CD8-positive, alpha-beta T cell (primary cell): ENCODE measurements at regions of chr1 and their contacts with region 1.

Region 1: DNA sequence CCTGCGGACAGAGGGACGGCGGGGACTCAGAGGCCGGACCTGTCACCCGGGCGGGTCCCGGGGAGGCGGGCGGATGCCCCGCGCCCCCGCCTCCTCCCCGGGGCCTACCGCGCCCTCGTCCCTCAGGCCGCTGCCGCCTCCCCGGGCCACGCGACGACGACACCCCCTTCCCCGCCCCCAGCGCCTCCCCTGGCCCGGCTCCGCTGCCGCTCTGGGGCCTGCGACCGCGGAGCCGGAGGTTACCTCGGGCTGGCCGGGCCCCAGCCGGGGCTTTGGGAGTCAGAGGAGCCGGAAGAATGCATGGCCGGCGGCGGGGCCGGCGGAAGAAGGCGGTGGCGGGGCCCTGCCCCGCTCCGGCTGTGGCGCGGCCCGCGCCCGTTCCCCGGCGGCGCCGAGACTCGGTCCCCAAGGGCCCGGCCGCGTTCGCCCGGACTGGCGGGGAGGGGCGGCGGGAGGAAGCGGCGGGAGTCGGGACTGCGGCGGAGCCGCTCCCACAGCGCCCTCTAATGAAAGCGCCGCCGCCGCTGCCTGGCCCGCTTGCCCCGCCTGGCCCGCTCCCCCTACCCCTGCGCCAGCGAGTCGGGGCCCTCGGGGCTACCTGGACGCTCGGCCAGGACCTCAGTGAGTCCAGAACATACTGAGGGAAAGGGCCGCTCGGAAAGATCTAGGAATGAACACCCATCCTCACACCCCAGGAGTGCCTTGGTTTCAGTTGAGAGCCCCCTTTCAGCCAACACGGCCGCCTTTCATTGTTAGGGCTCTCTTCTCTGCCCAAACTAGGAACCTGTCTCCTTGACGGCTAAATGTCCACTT is at the start of gene LPGAT1:
- DNase-seq: peak; percentile 37 to 84 (median 71)
- ATAC-seq: peak; percentile 79
- H3K4me3 ChIP-seq: peak within 1 kb of the TSS; percentile 69 to 75
- H3K4me3 Mint-ChIP-seq: peak within 1 kb of the TSS; percentile 90
- H3K27ac ChIP-seq: peak within 1 kb of the TSS; percentile 50 to 78
- H3K27ac Mint-ChIP-seq: peak within 1 kb of the TSS; percentile 92
- H3K4me1 ChIP-seq: peaks cover 44% of the 10 kb centered on the region
- H3K4me1 Mint-ChIP-seq: peaks cover 64% of the 10 kb centered on the region
- H3K27me3 ChIP-seq: no peaks in the 10 kb centered on the region
- H3K27me3 Mint-ChIP-seq: no peaks in the 10 kb centered on the region
- CTCF ChIP-seq: peak; percentile 51
- total RNA-seq, gene LPGAT1: 17.9 to 19.1 TPM

Region 2: GRCh38 chr1:211739671-211740411 is 90.7 kb before region 1 on chr1:
- CTCF ChIA-PET with region 1: no interaction called
- POLR2A ChIA-PET with region 1: no interaction called
- intact Hi-C with region 1: loop called in 1 of 2 experiments (anchors 5 kb)
- DNase-seq: peak in 3 of 9 experiments; percentile 31 to 66 (median 49)
- ATAC-seq: peak; percentile 67
- H3K4me3 ChIP-seq: peak overlapping the region in 1 of 2 experiments; percentile 10
- H3K4me3 Mint-ChIP-seq: peak overlapping the region; percentile 74
- H3K27ac ChIP-seq: peak overlapping the region in 1 of 2 experiments; percentile 68
- H3K27ac Mint-ChIP-seq: peak overlapping the region; percentile 90
- H3K4me1 ChIP-seq: peaks cover 35% of the 10 kb centered on the region
- H3K4me1 Mint-ChIP-seq: peaks cover 39% of the 10 kb centered on the region
- H3K27me3 ChIP-seq: no peaks in the 10 kb centered on the region
- H3K27me3 Mint-ChIP-seq: no peaks in the 10 kb centered on the region
- CTCF ChIP-seq: no peak

Region 3: DNA sequence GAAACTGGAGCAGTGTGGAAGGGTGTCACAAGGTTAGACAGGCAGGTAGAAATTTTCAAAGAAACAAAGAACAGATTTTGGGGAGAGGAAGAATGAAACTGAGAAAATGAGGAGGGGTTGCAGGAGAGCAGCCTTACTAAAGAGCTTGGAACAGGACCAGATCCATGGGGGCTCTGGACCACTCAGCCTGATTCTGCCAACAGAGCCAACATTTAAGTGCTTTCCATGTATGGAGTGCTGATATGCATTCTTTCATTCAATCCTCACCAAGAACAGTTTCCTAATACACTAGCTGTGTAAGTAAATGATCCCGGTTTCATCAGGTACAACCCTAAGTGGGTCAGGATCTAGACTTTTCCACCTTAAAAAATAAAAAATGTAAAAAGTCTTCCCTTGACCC is 16.2 kb before region 1 on chr1:
- CTCF ChIA-PET with region 1: no interaction called
- POLR2A ChIA-PET with region 1: no interaction called
- intact Hi-C with region 1: no loop called
- DNase-seq: no peak
- ATAC-seq: no peak
- H3K4me3 ChIP-seq: no peak overlapping the region
- H3K4me3 Mint-ChIP-seq: no peak overlapping the region
- H3K27ac ChIP-seq: no peak overlapping the region
- H3K27ac Mint-ChIP-seq: no peak overlapping the region
- H3K4me1 ChIP-seq: no peaks in the 10 kb centered on the region
- H3K4me1 Mint-ChIP-seq: peaks cover 3% of the 10 kb centered on the region
- H3K27me3 ChIP-seq: no peaks in the 10 kb centered on the region
- H3K27me3 Mint-ChIP-seq: no peaks in the 10 kb centered on the region
- CTCF ChIP-seq: no peak

Region 4: GRCh38 chr1:212089560-212090163 is 259.1 kb after region 1 on chr1:
- CTCF ChIA-PET with region 1: no interaction called
- POLR2A ChIA-PET with region 1: no interaction called
- intact Hi-C with region 1: no loop called
- DNase-seq: no peak
- ATAC-seq: no peak
- H3K4me3 ChIP-seq: no peak overlapping the region
- H3K4me3 Mint-ChIP-seq: no peak overlapping the region
- H3K27ac ChIP-seq: no peak overlapping the region
- H3K27ac Mint-ChIP-seq: no peak overlapping the region
- H3K4me1 ChIP-seq: no peaks in the 10 kb centered on the region
- H3K4me1 Mint-ChIP-seq: peaks cover 10% of the 10 kb centered on the region
- H3K27me3 ChIP-seq: no peaks in the 10 kb centered on the region
- H3K27me3 Mint-ChIP-seq: no peaks in the 10 kb centered on the region
- CTCF ChIP-seq: no peak